Posterior vena cava (tissue), 2 donors: ENCODE measurements at regions of chr10 and their contacts with region 1.

Region 1: GRCh38 chr10:21285742-21286331 is 239.6 kb downstream of the SKIDA1 start:
- DNase-seq: no peak

Region 2: GRCh38 chr10:19853831-19854230 is 1432.0 kb before region 1 on chr10:
- intact Hi-C with region 1: loop called in 1 of 2 experiments (anchors 10 kb)
- DNase-seq: no peak

Region 3: DNA sequence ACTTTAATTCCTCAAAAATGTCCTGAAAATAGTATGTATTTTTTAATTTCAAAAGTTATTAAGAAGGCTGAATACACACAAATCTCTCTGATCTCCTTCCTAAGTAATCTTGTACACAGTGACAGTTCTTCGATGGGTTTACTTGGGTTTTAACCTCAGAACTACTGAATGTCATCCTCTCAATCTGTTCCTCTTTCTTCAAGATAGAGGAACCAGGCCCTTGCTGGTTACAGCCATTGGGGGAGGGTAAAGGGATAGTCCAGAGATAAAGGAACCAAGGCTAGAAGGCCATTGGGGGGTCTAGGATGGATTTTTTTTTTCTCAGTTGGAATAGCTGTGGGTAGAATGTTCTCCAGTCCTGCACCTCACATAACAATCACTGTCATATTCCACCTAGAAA is 14.7 kb after region 1 on chr10:
- intact Hi-C with region 1: no loop called
- DNase-seq: no peak